ENCODE measurements at regions of chr19 and their contacts with region 1.

Region 1: DNA sequence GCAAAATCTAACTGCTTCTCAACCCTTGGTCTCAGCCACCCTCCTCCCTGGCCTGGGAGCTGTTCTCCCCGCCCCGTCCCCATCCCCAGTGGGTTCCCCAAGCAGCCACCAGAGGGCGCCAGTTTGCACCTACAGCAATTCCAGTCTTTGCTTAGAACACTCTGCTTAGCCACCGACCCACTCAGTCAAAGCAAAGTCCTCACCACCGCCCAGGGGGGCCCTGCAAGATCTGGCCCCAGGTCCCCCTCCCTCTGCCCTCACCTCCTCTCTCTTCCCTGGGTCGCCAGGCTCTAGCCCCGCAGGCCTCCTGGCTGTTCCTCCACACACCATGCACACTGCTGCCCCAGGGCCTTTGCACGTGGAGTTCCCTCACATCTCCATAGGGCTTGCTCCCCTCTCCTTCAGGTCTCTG is 12.4 kb downstream of the TMEM143 start:
- DNase-seq: no peak
- ATAC-seq: peak; percentile 67
- H3K4me3 ChIP-seq: no peak overlapping the region
- H3K27ac ChIP-seq: no peak overlapping the region
- H3K4me1 ChIP-seq: peaks cover 22 to 46% of the 10 kb centered on the region in 2 experiments
- H3K27me3 ChIP-seq: no peaks in the 10 kb centered on the region
- CTCF ChIP-seq: peak; percentile 75 to 96 (median 95); a peak in 5 of 6 replicates
- POLR2A ChIP-seq: no peak
- RAD21 ChIP-seq: peak; percentile 80

Region 2: DNA sequence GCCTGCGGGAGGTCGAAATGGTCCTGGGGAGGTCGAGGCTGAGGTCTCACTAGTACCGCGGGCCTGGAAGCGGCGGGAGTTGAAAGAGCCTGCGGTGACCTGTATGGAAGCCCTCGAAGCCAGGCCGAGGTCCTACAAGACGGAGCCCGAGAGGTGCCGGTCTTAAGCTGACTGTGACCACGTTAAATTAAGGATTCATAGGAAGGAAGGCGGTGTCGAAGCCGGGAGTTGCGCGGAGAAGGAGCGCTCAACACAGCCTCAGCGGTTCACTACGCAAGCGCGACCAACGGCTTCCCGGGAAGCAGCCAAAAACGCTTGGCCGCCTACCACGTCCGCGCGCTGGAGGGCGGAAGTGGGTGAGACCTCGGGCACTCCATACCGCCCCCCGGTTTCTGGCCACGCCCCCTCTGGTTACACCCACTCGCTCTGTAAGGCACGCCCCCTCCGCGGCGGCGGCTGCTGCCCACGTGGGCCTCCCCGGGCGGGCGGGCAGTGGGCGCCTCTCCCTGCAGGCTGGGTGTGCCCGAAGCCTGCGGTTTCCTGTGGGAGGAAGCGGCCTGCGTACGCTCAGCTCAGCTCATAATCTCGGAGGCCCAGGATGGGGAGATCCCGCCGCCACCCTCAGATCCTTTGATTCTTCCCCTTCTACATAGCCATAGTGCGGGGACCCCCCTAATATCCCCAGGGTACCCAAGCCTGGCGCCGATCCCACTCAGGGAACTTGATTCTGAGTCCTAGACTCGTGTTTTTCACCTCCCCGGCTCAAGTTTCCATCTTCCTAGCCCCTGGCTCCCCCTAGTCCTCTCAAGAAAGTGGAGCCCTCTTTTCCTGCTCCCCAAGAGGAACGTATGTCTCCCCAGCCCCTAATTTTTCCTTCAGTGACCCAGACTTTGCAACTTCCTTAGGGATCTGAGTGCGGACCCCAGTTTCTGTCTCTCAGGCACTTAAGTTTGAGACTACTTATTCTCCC is 29.4 kb before region 1 on chr19:
- CTCF ChIA-PET with region 1: interaction called, 3 read pairs
- POLR2A ChIA-PET with region 1: no interaction called
- RAD21 ChIA-PET with region 1: no interaction called
- intact Hi-C with region 1: loop called (anchors 1 kb)
- DNase-seq: peak; percentile 94
- ATAC-seq: peak; percentile 69
- H3K4me3 ChIP-seq: peak overlapping the region; percentile 55 to 67
- H3K27ac ChIP-seq: peak overlapping the region; percentile 96
- H3K4me1 ChIP-seq: peaks cover 40 to 76% of the 10 kb centered on the region in 2 experiments
- H3K27me3 ChIP-seq: no peaks in the 10 kb centered on the region
- CTCF ChIP-seq: peak in 1 of 3 experiments; percentile 8; a peak in 1 of 6 replicates
- POLR2A ChIP-seq: peak; percentile 59
- RAD21 ChIP-seq: no peak

Measured in HCT116 (cell line).